ENCODE measurements at regions of chr18 and their contacts with region 1.

Region 1: GRCh38 chr18:48488388-48488850 is 50.4 kb upstream of the CTIF start:
- DNase-seq: peak; percentile 69 to 83
- H3K4me3 ChIP-seq: no peak overlapping the region
- H3K4me3 Mint-ChIP-seq: peak overlapping the region; percentile 54
- H3K27ac Mint-ChIP-seq: peak overlapping the region; percentile 92
- H3K4me1 ChIP-seq: peaks cover 31% of the 10 kb centered on the region
- H3K4me1 Mint-ChIP-seq: peaks cover 26% of the 10 kb centered on the region
- H3K27me3 ChIP-seq: no peaks in the 10 kb centered on the region
- H3K27me3 Mint-ChIP-seq: no peaks in the 10 kb centered on the region
- CTCF ChIP-seq: no peak

Region 2: DNA sequence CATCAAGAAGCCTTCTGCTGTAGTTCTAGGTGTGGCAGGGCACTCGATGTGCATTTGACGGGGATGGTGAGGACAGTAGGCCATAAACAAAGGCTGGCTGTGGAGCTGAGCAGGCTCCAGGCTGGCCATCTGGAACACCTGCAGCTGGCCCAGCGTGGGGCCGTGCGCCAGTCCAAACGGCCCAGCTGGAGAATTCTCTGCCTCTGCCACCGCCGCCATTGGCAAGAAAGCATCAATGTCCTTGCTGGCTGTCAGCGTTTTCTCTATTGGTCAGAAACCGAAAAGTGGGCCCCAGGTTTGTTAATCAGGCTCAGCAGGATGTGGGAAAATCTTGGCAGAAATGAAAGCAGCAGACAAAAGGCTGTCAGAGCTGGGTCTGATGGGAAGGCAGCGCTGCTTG is 26.4 kb after region 1 on chr18:
- CTCF ChIA-PET with region 1: no interaction called
- POLR2A ChIA-PET with region 1: no interaction called
- intact Hi-C with region 1: loop called (anchors 1 kb)
- DNase-seq: no peak
- H3K4me3 ChIP-seq: no peak overlapping the region
- H3K4me3 Mint-ChIP-seq: no peak overlapping the region
- H3K27ac Mint-ChIP-seq: no peak overlapping the region
- H3K4me1 ChIP-seq: no peaks in the 10 kb centered on the region
- H3K4me1 Mint-ChIP-seq: no peaks in the 10 kb centered on the region
- H3K27me3 ChIP-seq: no peaks in the 10 kb centered on the region
- H3K27me3 Mint-ChIP-seq: no peaks in the 10 kb centered on the region
- CTCF ChIP-seq: no peak

Region 3: DNA sequence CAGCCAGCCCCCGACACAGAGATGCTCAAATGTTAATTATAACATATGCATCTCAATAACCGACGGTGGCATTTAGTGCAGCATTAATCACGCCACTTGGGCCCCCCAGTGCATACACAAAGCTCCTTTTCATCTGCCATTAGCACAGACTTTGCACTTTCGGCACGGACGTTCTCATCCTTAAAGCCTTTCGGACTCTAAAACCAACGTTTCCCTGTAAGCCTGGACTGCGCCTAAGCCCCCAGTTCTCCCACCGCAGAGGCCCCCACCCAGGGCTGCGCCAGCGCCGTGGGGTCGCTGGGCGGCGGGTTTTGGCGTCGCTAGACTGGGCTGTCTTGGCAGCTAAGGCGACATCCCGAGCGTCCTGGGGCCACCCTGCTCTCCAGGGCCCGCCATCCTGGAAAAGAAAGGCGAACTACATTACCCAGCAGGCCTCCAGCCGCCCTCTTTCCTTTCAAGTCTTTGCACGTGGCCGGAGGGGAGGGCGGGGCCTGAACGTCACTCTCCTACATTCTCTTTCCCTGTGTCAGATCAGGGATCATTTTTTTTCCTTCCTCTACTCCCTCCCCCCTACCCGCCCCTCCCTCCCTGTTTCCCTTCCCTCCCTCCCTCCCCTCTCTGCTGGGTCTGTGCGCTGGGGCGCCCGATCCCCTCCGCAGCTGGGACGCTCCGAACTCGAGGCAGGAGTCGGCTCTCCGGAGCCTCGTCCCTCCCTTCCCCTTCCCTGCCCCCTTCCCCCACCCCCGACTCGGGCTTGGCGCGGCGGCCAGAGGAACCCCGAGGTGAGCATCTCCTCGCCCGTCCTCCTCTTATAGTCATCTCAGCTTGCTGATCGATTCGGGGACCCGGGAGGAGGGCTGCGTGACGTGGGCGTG is 50.3 kb after region 1 on chr18 and contains the start of gene CTIF:
- CTCF ChIA-PET with region 1: no interaction called
- POLR2A ChIA-PET with region 1: interaction called, 3 read pairs
- intact Hi-C with region 1: loop called (anchors 1 kb)
- DNase-seq: peak; percentile 90 to 94
- H3K4me3 ChIP-seq: peak within 1 kb of the TSS; percentile 65
- H3K4me3 Mint-ChIP-seq: peak within 1 kb of the TSS; percentile 77
- H3K27ac Mint-ChIP-seq: peak within 1 kb of the TSS; percentile 48
- H3K4me1 ChIP-seq: peaks cover 22% of the 10 kb centered on the region
- H3K4me1 Mint-ChIP-seq: no peaks in the 10 kb centered on the region
- H3K27me3 ChIP-seq: no peaks in the 10 kb centered on the region
- H3K27me3 Mint-ChIP-seq: no peaks in the 10 kb centered on the region
- CTCF ChIP-seq: no peak
- total RNA-seq, gene CTIF: 19.9 and 21.4 TPM in 2 replicates